ENCODE measurements at regions of chr11 and their contacts with region 1.

Region 1: DNA sequence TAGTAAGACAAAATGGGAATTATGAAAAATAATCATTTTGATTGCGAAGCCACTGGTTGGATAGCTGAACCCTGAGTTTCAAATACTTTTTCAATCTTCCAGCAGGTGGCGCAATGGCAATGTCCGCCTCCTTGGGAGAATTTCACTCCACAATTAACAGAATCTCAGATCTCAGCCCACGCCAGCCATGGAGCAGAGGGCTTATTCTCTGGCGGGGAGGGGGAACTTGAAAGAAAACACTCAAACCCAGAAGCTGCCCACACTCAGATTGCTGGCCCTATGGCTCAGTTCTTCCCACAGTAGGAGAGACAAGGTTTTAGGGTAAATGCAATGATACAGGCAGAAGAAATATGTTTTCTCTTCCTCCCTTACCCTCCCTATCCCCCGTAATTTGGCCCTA is 38.7 kb upstream of the RCN1 start:
- DNase-seq: no peak

Region 2: GRCh38 chr11:32029721-32030120 is 22.5 kb before region 1 on chr11:
- intact Hi-C with region 1: no loop called
- DNase-seq: no peak

Region 3: DNA sequence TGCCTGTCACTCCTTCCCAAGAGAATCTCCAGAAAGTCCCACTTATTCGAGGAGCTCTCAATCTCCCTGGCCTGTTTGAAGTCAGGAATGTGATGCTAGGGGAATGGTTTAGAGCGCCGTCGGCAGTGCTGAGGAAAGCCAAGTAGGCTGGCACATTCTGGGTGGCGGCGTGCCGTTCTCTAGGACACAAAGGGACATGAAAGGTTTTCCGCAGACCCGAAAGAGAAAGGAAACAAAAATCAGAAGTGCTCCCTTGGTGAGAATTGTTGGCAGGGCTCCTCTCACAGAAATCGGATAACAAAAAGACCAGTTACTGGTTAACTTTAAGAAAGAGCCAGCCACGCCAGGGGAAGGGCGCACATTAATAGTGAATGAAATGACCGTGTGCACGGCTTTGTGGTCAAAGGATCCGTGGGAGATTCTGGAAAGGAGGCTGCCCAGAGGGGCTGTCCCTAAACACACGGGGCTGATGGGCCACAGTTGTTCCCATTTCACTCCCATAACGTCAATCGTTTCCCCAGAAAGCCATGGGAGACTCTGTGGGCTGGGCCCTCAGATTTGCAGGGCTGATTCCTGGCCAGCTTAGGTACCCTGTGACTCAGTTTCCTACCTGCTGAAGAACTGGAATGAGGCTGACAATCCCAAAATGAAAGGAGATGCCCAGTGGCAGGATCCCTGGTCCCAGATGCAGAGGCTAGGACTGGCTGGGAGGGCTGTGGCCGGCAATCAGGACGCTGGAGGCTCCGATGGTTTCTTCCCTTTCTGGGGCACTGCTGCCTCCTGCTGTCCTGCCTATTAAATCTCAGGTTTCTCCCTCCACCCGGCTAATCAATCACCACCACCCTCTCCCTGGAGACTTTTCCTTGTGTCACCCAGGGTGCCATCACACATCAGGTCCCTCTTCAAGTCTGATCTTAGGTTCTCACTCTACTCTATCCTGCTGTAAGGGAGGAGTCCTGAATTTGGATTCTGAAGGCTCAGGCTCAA is 120.9 kb after region 1 on chr11:
- intact Hi-C with region 1: loop called in 1 of 2 experiments (anchors 2 kb)
- DNase-seq: no peak

Measured in posterior vena cava (tissue), 2 donors.